Mammary epithelial cell (primary cell): ENCODE measurements at regions of chr2 and their contacts with region 1.

Region 1: DNA sequence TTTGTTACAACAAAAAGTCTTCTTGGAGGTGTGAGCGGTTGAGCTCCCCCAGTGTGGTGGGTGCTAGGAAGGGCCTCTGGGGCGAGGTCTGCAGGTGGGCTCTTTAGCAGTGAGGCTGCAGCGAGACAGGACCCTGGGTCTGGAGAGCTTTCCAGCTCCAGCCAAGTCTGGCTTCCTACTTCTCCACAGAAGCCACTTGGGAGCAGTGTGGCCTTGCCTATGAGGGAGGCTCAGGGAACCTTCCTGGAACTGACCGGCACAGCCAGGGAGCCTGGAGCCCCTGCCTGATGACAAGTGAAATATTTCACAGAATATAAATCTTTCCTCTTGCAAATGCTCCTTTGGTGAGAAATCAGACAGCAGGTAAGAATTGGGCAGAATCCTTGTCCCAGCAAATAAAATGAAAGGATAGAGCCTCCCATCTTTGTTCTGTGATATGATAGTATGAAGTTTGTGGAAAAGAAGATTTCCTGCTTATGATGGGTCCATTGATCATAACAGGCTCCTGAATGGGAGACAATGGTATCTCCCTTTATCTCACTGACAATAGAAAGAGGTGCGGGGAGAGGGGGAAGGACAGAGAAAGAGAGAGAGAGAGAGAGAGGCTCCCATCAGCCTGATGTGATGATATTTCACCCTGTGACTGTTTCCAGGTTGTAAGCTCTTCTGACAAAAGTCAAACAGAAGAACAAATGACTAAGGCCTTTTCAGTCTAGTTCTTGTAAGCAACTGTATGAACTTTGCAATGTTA is 289.8 kb upstream of the SPRED2 start:
- DNase-seq: peak; percentile 9
- H3K4me3 ChIP-seq: no peak overlapping the region
- H3K27ac ChIP-seq: no peak overlapping the region
- H3K4me1 ChIP-seq: no peaks in the 10 kb centered on the region
- H3K27me3 ChIP-seq: peaks cover 4% of the 10 kb centered on the region
- CTCF ChIP-seq: peak in 1 of 2 donors; percentile 62

Region 2: GRCh38 chr2:65215946-65216345 is 506.3 kb before region 1 on chr2:
- CTCF ChIA-PET with region 1: no interaction called
- dilution Hi-C with region 1: no loop called
- in situ Hi-C with region 1: no loop called
- intact Hi-C with region 1: no loop called
- DNase-seq: no peak
- H3K4me3 ChIP-seq: no peak overlapping the region
- H3K27ac ChIP-seq: no peak overlapping the region
- H3K4me1 ChIP-seq: no peaks in the 10 kb centered on the region
- H3K27me3 ChIP-seq: no peaks in the 10 kb centered on the region
- CTCF ChIP-seq: no peak

Region 3: DNA sequence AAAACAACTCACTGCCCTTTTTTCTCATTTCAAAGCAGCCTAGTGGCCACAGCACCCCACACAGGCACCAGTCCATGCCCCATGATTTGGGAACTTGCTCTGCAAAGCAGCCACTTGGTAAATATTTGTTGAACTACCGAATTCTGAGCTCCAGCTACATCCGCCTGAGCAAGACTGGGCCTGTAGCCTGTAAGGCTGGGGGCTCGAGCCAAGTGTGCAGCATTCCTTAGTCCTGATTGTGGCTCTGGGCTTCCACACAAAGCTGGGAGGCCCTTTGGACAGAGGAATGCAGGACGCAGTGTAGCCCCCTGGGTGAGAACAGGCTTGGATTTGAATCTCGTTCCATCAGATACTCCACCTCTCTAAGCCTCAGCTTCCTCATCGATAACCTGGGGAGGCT is 406.1 kb before region 1 on chr2:
- CTCF ChIA-PET with region 1: no interaction called
- dilution Hi-C with region 1: no loop called
- in situ Hi-C with region 1: no loop called
- intact Hi-C with region 1: no loop called
- DNase-seq: peak; percentile 86
- H3K4me3 ChIP-seq: no peak overlapping the region
- H3K27ac ChIP-seq: peak overlapping the region; percentile 63
- H3K4me1 ChIP-seq: peaks cover 59% of the 10 kb centered on the region
- H3K27me3 ChIP-seq: no peaks in the 10 kb centered on the region
- CTCF ChIP-seq: peak in 1 of 2 donors; percentile 4

Region 4: GRCh38 chr2:65800998-65801397 is 78.8 kb after region 1 on chr2:
- CTCF ChIA-PET with region 1: interaction called, 4 read pairs
- dilution Hi-C with region 1: no loop called
- in situ Hi-C with region 1: no loop called
- intact Hi-C with region 1: loop called (anchors 1 kb)
- DNase-seq: peak; percentile 20
- H3K4me3 ChIP-seq: no peak overlapping the region
- H3K27ac ChIP-seq: no peak overlapping the region
- H3K4me1 ChIP-seq: no peaks in the 10 kb centered on the region
- H3K27me3 ChIP-seq: no peaks in the 10 kb centered on the region
- CTCF ChIP-seq: peak; percentile 42 to 64

Region 5: DNA sequence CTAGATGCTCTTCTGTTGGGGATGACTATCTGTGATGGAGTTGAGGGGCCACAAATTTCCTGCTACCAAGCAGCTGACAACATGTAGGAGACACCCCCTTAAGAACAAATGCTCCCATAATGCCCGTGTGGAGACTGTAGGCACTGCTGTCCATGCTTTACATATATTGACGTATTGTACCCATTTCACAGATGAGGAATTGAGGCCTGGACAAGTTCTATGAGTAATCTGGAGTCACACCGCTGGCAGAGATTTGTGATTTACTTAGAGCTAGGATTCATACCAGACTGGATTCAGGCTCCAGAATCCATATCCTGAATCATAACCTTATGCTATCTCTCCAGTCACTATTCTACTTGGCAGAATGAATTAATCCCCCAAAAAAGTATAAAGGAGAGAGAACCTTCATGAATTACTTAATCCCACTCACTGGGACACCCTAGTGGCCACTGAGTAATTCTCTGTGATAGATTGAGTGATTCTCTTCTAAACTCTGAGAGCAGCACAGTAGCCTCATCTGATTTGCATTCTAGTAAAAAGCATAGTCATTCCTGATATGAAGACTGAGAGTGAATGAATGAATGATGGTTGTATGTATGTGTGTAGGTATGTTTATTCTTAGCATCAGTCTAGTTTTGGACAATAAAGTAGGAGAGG is 252.0 kb after region 1 on chr2:
- CTCF ChIA-PET with region 1: no interaction called
- dilution Hi-C with region 1: no loop called
- in situ Hi-C with region 1: no loop called
- intact Hi-C with region 1: loop called (anchors 10 kb)
- DNase-seq: no peak
- H3K4me3 ChIP-seq: no peak overlapping the region
- H3K27ac ChIP-seq: no peak overlapping the region
- H3K4me1 ChIP-seq: no peaks in the 10 kb centered on the region
- H3K27me3 ChIP-seq: no peaks in the 10 kb centered on the region
- CTCF ChIP-seq: peak in 1 of 2 donors; percentile 12

Region 6: DNA sequence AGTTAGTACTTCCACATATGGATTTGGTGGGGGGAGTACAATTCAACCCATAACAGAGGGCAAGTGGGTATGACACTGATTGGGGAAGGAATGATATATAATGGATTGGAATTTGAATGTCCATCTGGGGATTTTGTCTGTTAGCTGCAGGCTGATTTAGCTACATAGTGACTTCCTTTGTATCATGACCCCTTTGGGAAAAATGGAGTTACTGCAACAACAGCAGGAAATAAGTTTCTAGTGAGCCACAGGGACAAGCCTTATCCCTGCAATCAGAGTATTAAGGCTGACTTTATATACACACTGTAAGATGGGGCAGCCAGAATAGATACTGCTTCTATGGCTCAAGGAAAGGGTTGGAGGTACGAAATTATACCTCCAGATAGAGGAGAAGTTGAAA is 308.4 kb after region 1 on chr2:
- CTCF ChIA-PET with region 1: no interaction called
- dilution Hi-C with region 1: no loop called
- in situ Hi-C with region 1: no loop called
- intact Hi-C with region 1: loop called (anchors 1 kb)
- DNase-seq: no peak
- H3K4me3 ChIP-seq: no peak overlapping the region
- H3K27ac ChIP-seq: no peak overlapping the region
- H3K4me1 ChIP-seq: no peaks in the 10 kb centered on the region
- H3K27me3 ChIP-seq: no peaks in the 10 kb centered on the region
- CTCF ChIP-seq: no peak

Region 7: DNA sequence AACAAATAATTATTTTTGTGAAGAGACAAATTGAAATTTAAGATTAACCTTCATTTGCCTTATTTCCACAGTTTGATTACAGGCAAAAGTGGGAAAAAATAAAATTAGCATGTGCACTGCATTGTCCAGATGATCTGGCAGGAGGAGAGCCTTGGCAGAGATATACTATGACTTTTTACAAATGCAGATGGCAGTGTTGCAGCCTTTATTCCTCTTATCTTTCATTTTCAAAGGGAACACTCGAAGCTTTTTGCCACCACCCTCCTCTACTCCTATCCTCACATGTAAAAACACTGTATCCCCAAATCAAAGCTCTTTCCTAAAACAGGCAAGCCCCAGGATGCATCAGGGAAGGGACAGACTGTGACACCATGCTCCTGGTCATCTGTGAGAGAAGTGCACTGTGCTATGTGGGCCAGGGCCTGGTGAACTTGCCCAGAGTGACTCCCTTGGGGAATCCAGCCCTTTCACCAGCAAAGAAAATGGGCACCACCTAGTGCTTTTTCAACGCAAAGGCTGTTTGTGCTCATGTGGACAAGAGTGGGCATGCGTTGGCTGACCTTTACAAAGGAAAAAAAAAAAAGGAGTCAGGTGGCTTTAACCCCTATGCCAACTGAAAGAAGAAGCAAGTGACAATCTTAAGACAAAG is 1600.3 kb after region 1 on chr2:
- CTCF ChIA-PET with region 1: no interaction called
- dilution Hi-C with region 1: no loop called
- in situ Hi-C with region 1: no loop called
- intact Hi-C with region 1: loop called (anchors 2 kb)
- DNase-seq: peak; percentile 73
- H3K4me3 ChIP-seq: no peak overlapping the region
- H3K27ac ChIP-seq: no peak overlapping the region
- H3K4me1 ChIP-seq: peaks cover 3% of the 10 kb centered on the region
- H3K27me3 ChIP-seq: no peaks in the 10 kb centered on the region
- CTCF ChIP-seq: peak; percentile 82 to 87